ENCODE measurements at regions of chr11 and their contacts with region 1.

Region 1: DNA sequence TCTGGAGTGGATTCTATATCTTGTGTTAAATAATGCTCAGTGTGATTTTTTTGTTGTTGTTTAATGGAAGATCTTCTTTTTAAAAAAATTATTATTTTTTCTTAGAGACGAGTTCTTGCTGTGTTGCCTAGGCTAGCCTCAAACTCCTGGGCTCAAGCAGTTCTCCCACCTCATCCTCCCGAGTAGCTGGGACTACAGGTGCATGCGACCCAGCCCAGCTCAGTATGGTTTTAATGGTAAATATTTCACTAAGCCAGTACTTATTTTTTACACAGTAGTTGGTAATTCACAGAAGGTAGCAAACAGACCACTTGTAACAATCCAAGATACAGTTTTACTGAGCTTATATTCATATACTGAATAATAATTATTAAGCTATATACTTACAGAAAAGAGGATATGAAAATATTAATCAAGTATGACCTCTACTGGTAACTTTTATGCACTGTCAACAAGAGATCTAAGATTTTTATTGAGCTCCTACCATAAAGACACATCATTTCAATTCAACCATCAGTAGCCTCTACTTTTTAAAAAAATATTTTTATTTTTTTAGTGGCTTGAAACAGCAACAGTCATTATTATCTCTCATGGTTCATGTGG is 6.1 kb upstream of the CD59 start:
- DNase-seq: no peak
- H3K4me3 Mint-ChIP-seq: no peak overlapping the region
- H3K27ac Mint-ChIP-seq: no peak overlapping the region
- H3K4me1 Mint-ChIP-seq: peaks cover 9% of the 10 kb centered on the region
- H3K27me3 Mint-ChIP-seq: no peaks in the 10 kb centered on the region

Region 2: GRCh38 chr11:33362051-33362910 is 380.1 kb before region 1 on chr11:
- CTCF ChIA-PET with region 1: interaction called, 16 read pairs
- POLR2A ChIA-PET with region 1: no interaction called
- intact Hi-C with region 1: loop called (anchors 2 kb)
- DNase-seq: no peak
- H3K4me3 Mint-ChIP-seq: no peak overlapping the region
- H3K27ac Mint-ChIP-seq: no peak overlapping the region
- H3K4me1 Mint-ChIP-seq: peaks cover 2% of the 10 kb centered on the region
- H3K27me3 Mint-ChIP-seq: peaks cover 2% of the 10 kb centered on the region

Region 3: GRCh38 chr11:33542921-33543320 is 199.4 kb before region 1 on chr11:
- CTCF ChIA-PET with region 1: interaction called, 21 read pairs
- POLR2A ChIA-PET with region 1: no interaction called
- intact Hi-C with region 1: loop called (anchors 5 kb)
- DNase-seq: peak; percentile 52
- H3K4me3 Mint-ChIP-seq: no peak overlapping the region
- H3K27ac Mint-ChIP-seq: no peak overlapping the region
- H3K4me1 Mint-ChIP-seq: no peaks in the 10 kb centered on the region
- H3K27me3 Mint-ChIP-seq: peaks cover 29% of the 10 kb centered on the region

Region 4: GRCh38 chr11:33700425-33701271 is 41.7 kb before region 1 on chr11 and contains the start of gene C11orf91:
- CTCF ChIA-PET with region 1: interaction called, 13 read pairs
- POLR2A ChIA-PET with region 1: no interaction called
- intact Hi-C with region 1: no loop called
- DNase-seq: peak; percentile 96
- H3K4me3 Mint-ChIP-seq: peak within 1 kb of the TSS; percentile 83
- H3K27ac Mint-ChIP-seq: peak within 1 kb of the TSS; percentile 39
- H3K4me1 Mint-ChIP-seq: peaks cover 11% of the 10 kb centered on the region
- H3K27me3 Mint-ChIP-seq: peaks cover 14% of the 10 kb centered on the region
- total RNA-seq, gene C11orf91: not detected

Region 5: DNA sequence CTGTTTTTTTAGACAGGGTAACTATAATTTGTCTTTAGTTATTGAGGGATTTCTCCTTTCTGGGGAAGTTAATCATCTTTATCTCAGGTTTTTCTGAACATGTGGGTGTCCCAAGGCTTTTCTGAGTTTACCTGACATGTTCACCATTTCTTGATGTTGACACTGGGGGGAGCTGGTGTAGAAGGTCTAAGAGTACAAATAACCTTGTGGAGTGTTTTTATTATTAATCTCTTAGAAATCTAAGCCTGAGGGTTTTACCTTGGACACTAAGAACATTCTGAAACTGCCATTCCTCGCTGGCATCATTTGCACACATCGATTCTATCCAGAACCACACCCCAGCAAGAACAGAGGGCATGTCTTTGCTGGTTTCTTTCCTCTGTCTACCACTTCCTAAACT is 26.1 kb before region 1 on chr11:
- CTCF ChIA-PET with region 1: interaction called, 74 read pairs
- POLR2A ChIA-PET with region 1: no interaction called
- intact Hi-C with region 1: loop called (anchors 1 kb)
- DNase-seq: no peak
- H3K4me3 Mint-ChIP-seq: no peak overlapping the region
- H3K27ac Mint-ChIP-seq: no peak overlapping the region
- H3K4me1 Mint-ChIP-seq: peaks cover 2% of the 10 kb centered on the region
- H3K27me3 Mint-ChIP-seq: no peaks in the 10 kb centered on the region

Region 6: DNA sequence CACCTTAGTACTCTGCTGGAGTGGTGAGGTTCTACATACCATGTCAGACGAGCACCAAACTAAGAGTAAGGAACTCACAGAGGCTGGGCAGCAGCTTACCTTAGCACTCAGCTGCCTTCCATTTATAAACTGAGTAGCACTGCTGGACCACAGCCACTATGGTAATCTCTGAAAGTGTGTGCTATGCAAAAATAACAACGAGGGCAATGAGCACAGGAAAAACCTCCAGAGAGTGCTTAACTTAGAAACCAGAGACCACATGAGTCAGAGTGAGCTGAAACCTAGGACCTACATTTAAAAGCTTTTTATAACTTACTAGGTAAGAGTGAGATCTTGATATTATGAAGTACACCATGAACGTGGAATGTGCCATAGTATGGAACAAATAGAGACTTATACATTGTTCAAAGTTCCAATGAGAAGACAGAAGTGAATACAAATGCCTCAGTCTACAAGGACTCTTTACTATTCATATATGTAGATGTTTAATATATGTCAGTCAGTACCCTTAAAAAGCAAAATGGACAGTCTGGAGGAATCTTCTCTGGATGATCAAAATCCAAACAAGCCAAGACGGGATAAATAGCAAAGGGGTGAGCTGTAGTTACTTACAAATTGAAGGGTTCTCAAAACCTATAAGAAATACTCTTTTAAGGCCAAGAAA is 11.1 kb after region 1 on chr11:
- CTCF ChIA-PET with region 1: interaction called, 23 read pairs
- POLR2A ChIA-PET with region 1: interaction called, 4 read pairs
- intact Hi-C with region 1: no loop called
- DNase-seq: peak; percentile 27
- H3K4me3 Mint-ChIP-seq: no peak overlapping the region
- H3K27ac Mint-ChIP-seq: peak overlapping the region; percentile 11
- H3K4me1 Mint-ChIP-seq: peaks cover 11% of the 10 kb centered on the region
- H3K27me3 Mint-ChIP-seq: no peaks in the 10 kb centered on the region

Region 7: DNA sequence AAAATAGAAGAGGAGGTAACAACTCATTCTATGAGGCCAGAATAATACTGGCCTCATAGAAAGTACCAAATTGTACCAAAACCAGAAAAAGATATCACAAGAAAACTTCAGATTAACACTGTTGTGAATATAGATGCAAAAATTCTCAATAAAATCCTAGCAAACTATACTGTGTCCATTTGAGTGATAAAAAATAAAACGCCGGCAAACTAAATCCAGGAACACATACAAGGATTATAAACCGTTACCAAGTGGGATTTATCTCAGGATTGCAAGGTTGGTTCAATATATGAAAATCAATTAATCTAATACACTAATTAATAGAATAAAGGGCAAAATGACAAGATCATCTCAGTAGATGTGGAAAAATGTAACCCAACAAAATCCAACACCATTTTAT is 55.5 kb after region 1 on chr11:
- CTCF ChIA-PET with region 1: no interaction called
- POLR2A ChIA-PET with region 1: no interaction called
- intact Hi-C with region 1: no loop called
- DNase-seq: no peak
- H3K4me3 Mint-ChIP-seq: no peak overlapping the region
- H3K27ac Mint-ChIP-seq: no peak overlapping the region
- H3K4me1 Mint-ChIP-seq: peaks cover 8% of the 10 kb centered on the region
- H3K27me3 Mint-ChIP-seq: peaks cover 51% of the 10 kb centered on the region

Measured in activated CD4-positive, alpha-beta memory T cell treated with anti-CD3 and anti-CD28 coated beads for 36 hours (primary cell).